ENCODE measurements at regions of chr6 and their contacts with region 1.

Region 1: DNA sequence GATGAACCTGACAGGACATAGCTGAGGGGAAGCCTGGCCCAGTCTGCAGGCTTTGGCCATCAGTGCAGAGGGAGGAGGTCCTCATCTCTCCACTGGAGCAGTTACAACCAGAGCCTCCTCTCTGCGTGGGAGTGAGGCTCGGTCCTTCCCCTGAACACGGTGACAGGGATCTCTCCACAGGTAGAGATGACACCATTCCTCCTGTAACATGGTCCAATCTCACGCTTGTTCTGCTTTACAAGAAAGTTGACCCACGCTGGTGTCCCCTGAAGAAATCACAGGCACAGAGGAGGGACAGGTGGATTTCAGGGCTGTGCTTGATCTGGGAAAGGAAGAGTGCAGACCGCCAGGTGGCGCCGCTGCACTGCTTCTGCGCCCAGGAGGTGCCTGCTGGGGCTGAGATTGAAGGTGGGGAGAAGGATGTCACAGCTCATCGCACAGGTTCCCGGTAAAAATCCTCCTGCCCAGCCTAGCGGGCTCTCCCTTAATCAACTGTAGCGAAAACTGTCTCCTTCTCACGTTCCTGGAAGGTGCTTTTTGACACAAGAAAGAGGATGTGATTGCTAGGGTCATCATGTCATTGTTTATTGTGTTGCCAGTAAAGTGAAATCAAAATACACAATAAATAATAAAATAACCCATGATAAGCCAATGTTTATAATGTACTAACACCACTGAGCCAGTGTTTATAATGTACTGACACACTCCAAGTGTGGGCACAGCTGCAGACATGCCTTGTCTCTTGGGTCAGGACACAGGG is 20.4 kb downstream of the HLA-G start:
- DNase-seq: peak; percentile 73
- CTCF ChIP-seq: peak; percentile 92

Region 2: GRCh38 chr6:29864037-29864795 is 16.2 kb after region 1 on chr6:
- CTCF ChIA-PET with region 1: interaction called, 18 read pairs
- POLR2A ChIA-PET with region 1: no interaction called
- DNase-seq: no peak
- CTCF ChIP-seq: no peak

Region 3: GRCh38 chr6:29964887-29965562 is 117.0 kb after region 1 on chr6:
- CTCF ChIA-PET with region 1: interaction called, 17 read pairs
- POLR2A ChIA-PET with region 1: no interaction called
- DNase-seq: peak; percentile 73
- CTCF ChIP-seq: no peak

Region 4: GRCh38 chr6:30013291-30013922 is 165.4 kb after region 1 on chr6:
- CTCF ChIA-PET with region 1: interaction called, 46 read pairs
- POLR2A ChIA-PET with region 1: no interaction called
- DNase-seq: peak; percentile 34
- CTCF ChIP-seq: peak; percentile 67